ENCODE measurements at regions of chr18 and their contacts with region 1.

Region 1: DNA sequence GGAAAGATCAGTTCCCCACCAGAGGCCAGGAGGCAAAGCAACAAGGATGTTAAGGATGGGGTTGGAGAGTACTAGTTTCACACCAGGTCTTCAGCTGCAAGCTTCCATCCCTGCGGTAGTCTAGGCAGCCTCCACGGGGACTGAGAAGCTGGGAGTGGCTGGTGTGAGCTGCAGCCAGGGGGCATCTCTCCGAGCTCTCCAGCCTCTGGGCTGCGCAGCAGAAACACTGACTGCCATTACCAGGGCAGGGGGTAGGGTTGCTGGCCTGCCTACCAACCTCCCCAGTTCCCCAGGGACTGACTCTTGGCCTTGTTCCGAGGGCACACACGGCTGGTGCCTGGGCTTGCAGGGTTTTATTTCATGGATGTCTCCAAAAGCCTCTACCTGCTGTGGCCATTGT is 15.9 kb downstream of the GATA6 start:
- DNase-seq: peak in 1 of 2 donors; percentile 46
- ATAC-seq: peak; percentile 36 to 76 (median 66)
- H3K4me3 ChIP-seq: no peak overlapping the region
- H3K27ac ChIP-seq: peak overlapping the region; percentile 66 to 99 (median 76)
- H3K4me1 ChIP-seq: peaks cover 21 to 100% (median 87%) of the 10 kb centered on the region in 9 donors
- H3K27me3 ChIP-seq: peaks cover 0 to 5% (median 0%) of the 10 kb centered on the region in 7 donors
- CTCF ChIP-seq: peak in 7 of 9 donors; percentile 21 to 56 (median 26)

Region 2: DNA sequence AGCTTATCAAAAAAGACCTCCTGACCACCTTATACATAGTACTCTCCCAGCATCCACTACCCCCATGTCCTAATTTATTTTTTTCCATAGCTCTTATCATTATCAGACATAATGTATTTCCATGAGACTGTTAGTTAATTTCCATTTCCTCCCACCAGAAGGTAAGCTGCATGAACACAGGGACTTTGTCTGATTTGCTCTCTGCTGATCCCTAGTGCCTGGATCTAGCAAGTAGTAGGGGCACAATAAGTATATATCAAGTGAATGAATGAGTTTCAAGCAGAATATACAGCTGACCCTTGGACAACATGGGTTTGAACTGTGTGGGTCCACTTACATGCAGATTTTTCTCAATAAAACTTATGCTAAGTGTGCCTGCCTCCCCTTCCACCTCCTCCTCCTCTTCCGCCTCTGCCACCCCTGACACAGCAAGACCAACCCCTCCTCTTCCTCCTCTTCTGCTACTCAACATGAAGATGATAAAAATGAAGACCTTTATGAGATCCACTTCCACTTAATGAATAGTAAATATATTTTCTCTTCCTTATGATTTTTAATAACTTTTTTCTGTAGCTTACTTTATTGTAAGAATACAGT is 178.7 kb after region 1 on chr18:
- intact Hi-C with region 1: loop called in 1 of 10 experiments (anchors 5 kb)
- DNase-seq: no peak
- ATAC-seq: peak; percentile 47 to 81 (median 72)
- H3K4me3 ChIP-seq: no peak overlapping the region
- H3K27ac ChIP-seq: no peak overlapping the region
- H3K4me1 ChIP-seq: no peaks in the 10 kb centered on the region
- H3K27me3 ChIP-seq: no peaks in the 10 kb centered on the region
- CTCF ChIP-seq: peak in 7 of 9 donors; percentile 32 to 69 (median 48)

Measured in heart right ventricle (tissue), 16 donors.